IMR-90 (cell line): ENCODE measurements at regions of chr11 and their contacts with region 1.

Region 1: GRCh38 chr11:58316142-58316541 is 42.7 kb downstream of the OR5B17 start:
- DNase-seq: peak; percentile 80
- ATAC-seq: peak; percentile 43
- H3K4me3 ChIP-seq: no peak overlapping the region
- H3K27ac ChIP-seq: peak overlapping the region; percentile 98
- H3K4me1 ChIP-seq: peaks cover 13% of the 10 kb centered on the region
- H3K27me3 ChIP-seq: no peaks in the 10 kb centered on the region
- CTCF ChIP-seq: no peak
- POLR2A ChIP-seq: no peak
- RAD21 ChIP-seq: no peak

Region 2: GRCh38 chr11:57667736-57668435 is 648.3 kb before region 1 on chr11 and contains the start of gene ZDHHC5:
- CTCF ChIA-PET with region 1: no interaction called
- POLR2A ChIA-PET with region 1: no interaction called
- dilution Hi-C with region 1: no loop called
- in situ Hi-C with region 1: no loop called
- intact Hi-C with region 1: loop called (anchors 5 kb)
- DNase-seq: peak; percentile 100
- ATAC-seq: peak; percentile 89
- H3K4me3 ChIP-seq: peak within 1 kb of the TSS; percentile 98
- H3K27ac ChIP-seq: peak within 1 kb of the TSS; percentile 94
- H3K4me1 ChIP-seq: peaks cover 2% of the 10 kb centered on the region; the same call in 1 of the 2 replicates
- H3K27me3 ChIP-seq: no peaks in the 10 kb centered on the region
- CTCF ChIP-seq: peak; percentile 57
- POLR2A ChIP-seq: peak; percentile 93
- RAD21 ChIP-seq: peak; percentile 27
- total RNA-seq, gene ZDHHC5: 19.4 and 21.4 TPM in 2 replicates

Region 3: GRCh38 chr11:58495906-58496305 is 179.8 kb after region 1 on chr11:
- CTCF ChIA-PET with region 1: no interaction called
- POLR2A ChIA-PET with region 1: no interaction called
- dilution Hi-C with region 1: no loop called
- in situ Hi-C with region 1: no loop called
- intact Hi-C with region 1: loop called (anchors 10 kb)
- DNase-seq: no peak
- ATAC-seq: no peak
- H3K4me3 ChIP-seq: no peak overlapping the region
- H3K27ac ChIP-seq: peak overlapping the region; percentile 43; the same call in 1 of the 2 replicates
- H3K4me1 ChIP-seq: peaks cover 14% of the 10 kb centered on the region; the same call in 1 of the 2 replicates
- H3K27me3 ChIP-seq: no peaks in the 10 kb centered on the region
- CTCF ChIP-seq: no peak
- POLR2A ChIP-seq: no peak
- RAD21 ChIP-seq: no peak